ENCODE measurements at regions of chr5 and their contacts with region 1.

Region 1: DNA sequence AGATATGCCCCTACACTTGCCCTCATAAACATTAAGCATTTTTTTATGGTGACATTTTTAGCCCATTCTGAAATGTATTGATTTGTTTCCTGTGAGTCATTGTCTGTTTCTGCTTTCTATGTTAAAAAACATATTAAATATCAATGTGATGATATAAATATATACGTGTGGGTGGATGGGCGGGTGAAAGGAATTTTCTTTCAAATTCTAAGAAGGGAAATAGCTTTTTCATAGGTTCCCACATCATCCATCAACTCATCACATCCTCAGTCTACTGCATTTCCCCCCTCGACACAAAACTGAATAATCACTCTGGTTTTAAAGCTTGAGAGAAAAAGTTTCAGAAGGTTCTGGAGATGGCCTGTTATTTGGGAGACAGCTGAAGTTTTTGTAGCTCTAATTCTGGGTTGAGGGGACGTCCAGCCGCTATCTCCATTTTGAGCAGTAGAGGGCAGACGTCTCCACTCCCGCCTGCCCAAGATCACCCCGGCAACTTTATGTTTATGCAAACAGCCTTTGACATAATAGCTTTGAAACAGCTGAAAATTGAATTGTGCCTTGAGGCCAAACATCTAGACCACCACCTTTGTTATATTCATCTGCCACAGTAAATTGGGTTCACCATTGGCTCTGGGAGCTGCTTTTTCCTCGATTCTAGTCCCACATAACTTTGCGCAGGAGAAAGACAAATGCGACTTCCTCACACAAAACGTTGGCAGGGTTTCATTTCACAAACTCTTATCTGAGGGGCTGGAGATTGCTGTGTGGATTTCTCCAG is 216.2 kb upstream of the CLINT1 start:
- DNase-seq: peak; percentile 10
- ATAC-seq: peak; percentile 89
- H3K4me3 ChIP-seq: no peak overlapping the region
- H3K27ac ChIP-seq: no peak overlapping the region
- H3K4me1 ChIP-seq: no peaks in the 10 kb centered on the region
- H3K27me3 ChIP-seq: no peaks in the 10 kb centered on the region
- CTCF ChIP-seq: peak; percentile 67
- EP300 ChIP-seq: no peak
- POLR2A ChIP-seq: no peak
- RAD21 ChIP-seq: no peak

Region 2: DNA sequence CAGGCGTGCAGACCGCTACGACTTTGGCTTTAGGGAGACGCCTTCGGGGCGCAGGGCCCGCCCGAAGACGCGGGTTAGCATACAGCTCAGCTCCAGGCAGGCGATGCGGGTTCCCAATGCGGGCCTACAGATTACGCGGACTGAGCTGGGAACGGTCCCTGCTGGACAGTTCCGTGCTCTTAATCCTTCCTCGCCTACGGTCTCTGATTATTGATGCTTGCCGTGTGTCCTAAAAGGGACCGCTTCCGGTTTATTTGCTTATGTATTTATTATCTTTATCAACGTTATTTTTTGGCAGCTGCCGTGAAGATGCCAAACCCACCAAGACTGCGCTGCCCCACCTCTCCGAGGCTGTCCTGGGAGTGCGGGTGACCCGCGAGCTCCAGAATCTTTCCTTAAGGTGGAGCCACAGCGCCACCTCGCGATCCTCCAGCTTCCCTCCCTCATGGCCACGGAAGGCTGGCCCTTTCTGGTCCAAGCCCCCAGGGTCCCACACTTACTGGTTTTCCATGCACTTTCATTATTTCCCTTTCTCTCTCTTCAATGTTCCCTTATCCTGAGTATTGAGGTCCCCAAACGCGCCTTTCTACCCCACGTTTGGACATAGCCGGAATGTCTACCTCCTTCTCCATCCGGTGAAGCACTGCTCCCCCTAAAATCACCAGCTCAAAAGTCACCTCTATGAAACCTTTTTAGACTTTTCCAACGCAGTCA is 1031.5 kb after region 1 on chr5:
- CTCF ChIA-PET with region 1: interaction called, 8 read pairs
- POLR2A ChIA-PET with region 1: no interaction called
- in situ Hi-C with region 1: loop called (anchors 10 kb)
- intact Hi-C with region 1: loop called (anchors 1 kb)
- DNase-seq: peak; percentile 24
- ATAC-seq: peak; percentile 96
- H3K4me3 ChIP-seq: no peak overlapping the region
- H3K27ac ChIP-seq: no peak overlapping the region
- H3K4me1 ChIP-seq: no peaks in the 10 kb centered on the region
- H3K27me3 ChIP-seq: peaks cover 1 to 30% of the 10 kb centered on the region in 2 experiments
- CTCF ChIP-seq: peak; percentile 90
- EP300 ChIP-seq: no peak
- POLR2A ChIP-seq: no peak
- RAD21 ChIP-seq: peak; percentile 87

Measured in HepG2 (cell line).